ENCODE measurements at regions of chr7 and their contacts with region 1.

Region 1: GRCh38 chr7:21945454-21946227 is at the start of gene CDCA7L:
- DNase-seq: peak; percentile 93
- H3K4me3 ChIP-seq: peak within 1 kb of the TSS; percentile 84
- H3K27ac ChIP-seq: peak within 1 kb of the TSS; percentile 79
- H3K4me1 ChIP-seq: peaks cover 63% of the 10 kb centered on the region
- CTCF ChIP-seq: peak; percentile 40; the same call in 1 of the 2 replicates
- total RNA-seq, gene CDCA7L: 155 and 157 TPM in 2 replicates

Region 2: DNA sequence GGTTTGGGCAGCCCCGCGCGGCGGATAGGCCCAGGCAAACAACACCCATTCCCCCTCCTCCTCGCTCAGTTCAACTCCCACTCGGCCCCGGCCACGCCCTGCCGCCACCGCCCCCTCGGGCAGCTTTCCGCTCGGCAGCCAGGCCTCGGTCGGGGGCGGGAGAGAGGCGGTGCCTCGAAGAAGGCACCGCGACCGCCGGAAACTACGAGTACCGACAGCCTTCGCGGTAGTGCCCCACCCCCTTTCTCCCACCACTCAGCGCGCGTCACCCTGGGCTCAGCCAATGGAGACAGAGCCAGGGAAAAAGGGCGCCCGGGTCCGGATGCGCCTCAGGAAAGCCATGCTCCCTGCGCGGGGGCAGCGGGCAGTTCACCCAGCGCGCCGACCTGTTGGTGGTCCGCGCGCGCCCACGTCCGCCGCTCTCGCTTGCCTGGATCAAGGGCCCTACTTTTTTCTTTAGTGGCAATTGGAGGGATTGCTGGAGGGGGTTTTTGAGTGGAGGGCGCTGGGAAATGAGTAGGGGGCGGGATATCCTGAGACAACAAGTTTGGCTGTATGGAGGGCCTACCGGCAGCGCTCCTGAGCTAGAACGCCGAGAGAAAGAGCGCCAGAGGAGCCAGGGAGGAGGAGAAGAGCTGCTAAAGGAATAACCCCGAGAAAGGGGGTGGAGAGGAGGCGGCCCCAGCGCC is 518.3 kb before region 1 on chr7:
- CTCF ChIA-PET with region 1: no interaction called
- POLR2A ChIA-PET with region 1: no interaction called
- intact Hi-C with region 1: loop called (anchors 2 kb)
- DNase-seq: peak; percentile 98
- H3K4me3 ChIP-seq: peak overlapping the region; percentile 88
- H3K27ac ChIP-seq: peak overlapping the region; percentile 86
- H3K4me1 ChIP-seq: peaks cover 42% of the 10 kb centered on the region
- CTCF ChIP-seq: no peak

Region 3: DNA sequence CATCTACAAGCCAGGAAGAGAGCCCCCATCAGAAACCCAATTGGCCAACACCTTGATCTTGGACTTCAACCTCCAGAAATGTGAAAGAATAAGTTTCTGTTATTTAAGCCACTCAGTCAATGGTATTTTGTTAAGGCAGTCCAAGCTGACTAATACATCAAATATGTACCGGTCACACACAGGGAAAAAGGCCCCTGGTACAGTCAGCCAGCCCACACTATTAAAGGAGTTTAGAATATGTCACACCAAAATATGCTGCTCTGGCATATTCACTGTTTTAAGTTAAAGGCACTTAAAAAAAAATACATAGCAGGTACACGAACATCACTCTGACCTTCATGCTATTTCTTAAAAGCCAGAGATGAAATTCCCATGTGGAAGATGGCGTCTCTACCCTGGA is 15.3 kb after region 1 on chr7:
- CTCF ChIA-PET with region 1: interaction called, 6 read pairs
- POLR2A ChIA-PET with region 1: interaction called, 194 read pairs
- intact Hi-C with region 1: loop called (anchors 1 kb)
- DNase-seq: no peak
- H3K4me3 ChIP-seq: no peak overlapping the region
- H3K27ac ChIP-seq: no peak overlapping the region
- H3K4me1 ChIP-seq: peaks cover 43% of the 10 kb centered on the region
- CTCF ChIP-seq: no peak

Region 4: GRCh38 chr7:21981524-21981923 is 35.9 kb after region 1 on chr7:
- CTCF ChIA-PET with region 1: no interaction called
- POLR2A ChIA-PET with region 1: no interaction called
- intact Hi-C with region 1: loop called (anchors 1 kb)
- DNase-seq: no peak
- H3K4me3 ChIP-seq: no peak overlapping the region
- H3K27ac ChIP-seq: no peak overlapping the region
- H3K4me1 ChIP-seq: no peaks in the 10 kb centered on the region
- CTCF ChIP-seq: peak; percentile 65

Region 5: GRCh38 chr7:22307816-22308545 is 362.3 kb after region 1 on chr7:
- CTCF ChIA-PET with region 1: no interaction called
- POLR2A ChIA-PET with region 1: no interaction called
- intact Hi-C with region 1: no loop called
- DNase-seq: no peak
- H3K4me3 ChIP-seq: no peak overlapping the region
- H3K27ac ChIP-seq: no peak overlapping the region
- H3K4me1 ChIP-seq: no peaks in the 10 kb centered on the region
- CTCF ChIP-seq: peak; percentile 19; the same call in 1 of the 2 replicates

Region 6: DNA sequence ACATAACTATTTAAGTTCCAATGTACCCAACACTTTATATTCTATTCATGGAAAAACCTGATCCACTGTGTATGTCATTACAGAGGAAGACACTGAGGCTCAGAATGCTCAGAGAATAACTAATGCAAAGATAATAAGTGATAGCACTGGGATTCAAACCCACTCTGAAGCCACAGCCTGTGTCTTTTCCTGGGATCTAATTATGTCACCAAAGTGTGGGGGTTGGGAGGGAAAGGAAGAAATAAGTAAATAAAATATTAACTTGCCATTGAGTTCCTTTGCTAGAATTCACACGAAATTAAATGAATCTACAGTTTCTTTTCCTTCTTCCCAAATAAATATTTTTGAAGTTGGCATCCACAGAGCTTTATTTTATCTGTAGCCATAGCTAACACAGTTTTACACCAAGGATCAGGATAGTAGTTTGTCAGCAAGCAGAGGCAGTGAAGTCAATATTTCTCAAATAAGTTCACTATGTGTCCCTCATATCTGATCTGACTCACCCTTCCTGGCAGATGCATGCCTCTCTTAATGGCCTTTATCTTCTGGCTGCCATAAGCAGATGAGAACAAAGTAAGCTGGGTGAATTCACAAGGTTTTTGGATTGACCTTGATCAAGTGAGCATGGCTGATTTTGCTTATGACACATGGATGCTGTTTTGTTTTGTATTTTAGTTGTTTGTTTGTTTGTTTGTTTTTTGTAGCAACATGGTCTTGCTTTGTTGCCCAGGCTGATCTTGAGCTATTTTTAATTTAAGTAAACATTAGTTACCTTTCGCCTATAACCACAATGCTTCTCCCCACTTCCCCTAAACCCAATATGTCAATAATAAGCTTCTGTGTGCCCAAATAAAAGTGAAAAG is 405.1 kb after region 1 on chr7:
- CTCF ChIA-PET with region 1: no interaction called
- POLR2A ChIA-PET with region 1: no interaction called
- intact Hi-C with region 1: loop called (anchors 5 kb)
- DNase-seq: peak; percentile 31
- H3K4me3 ChIP-seq: peak overlapping the region; percentile 53
- H3K27ac ChIP-seq: peak overlapping the region; percentile 82
- H3K4me1 ChIP-seq: peaks cover 86% of the 10 kb centered on the region
- CTCF ChIP-seq: no peak

Region 7: GRCh38 chr7:23013715-23014649 is 1068.3 kb after region 1 on chr7 and contains the start of gene HYCC1:
- CTCF ChIA-PET with region 1: no interaction called
- POLR2A ChIA-PET with region 1: no interaction called
- intact Hi-C with region 1: loop called (anchors 10 kb)
- DNase-seq: peak; percentile 99
- H3K4me3 ChIP-seq: peak within 1 kb of the TSS; percentile 98
- H3K27ac ChIP-seq: peak within 1 kb of the TSS; percentile 84
- H3K4me1 ChIP-seq: peaks cover 75% of the 10 kb centered on the region
- CTCF ChIP-seq: peak; percentile 79
- total RNA-seq, gene HYCC1: 43.3 and 69.9 TPM in 2 replicates